ENCODE measurements at regions of chr3 and their contacts with region 1.

Region 1: DNA sequence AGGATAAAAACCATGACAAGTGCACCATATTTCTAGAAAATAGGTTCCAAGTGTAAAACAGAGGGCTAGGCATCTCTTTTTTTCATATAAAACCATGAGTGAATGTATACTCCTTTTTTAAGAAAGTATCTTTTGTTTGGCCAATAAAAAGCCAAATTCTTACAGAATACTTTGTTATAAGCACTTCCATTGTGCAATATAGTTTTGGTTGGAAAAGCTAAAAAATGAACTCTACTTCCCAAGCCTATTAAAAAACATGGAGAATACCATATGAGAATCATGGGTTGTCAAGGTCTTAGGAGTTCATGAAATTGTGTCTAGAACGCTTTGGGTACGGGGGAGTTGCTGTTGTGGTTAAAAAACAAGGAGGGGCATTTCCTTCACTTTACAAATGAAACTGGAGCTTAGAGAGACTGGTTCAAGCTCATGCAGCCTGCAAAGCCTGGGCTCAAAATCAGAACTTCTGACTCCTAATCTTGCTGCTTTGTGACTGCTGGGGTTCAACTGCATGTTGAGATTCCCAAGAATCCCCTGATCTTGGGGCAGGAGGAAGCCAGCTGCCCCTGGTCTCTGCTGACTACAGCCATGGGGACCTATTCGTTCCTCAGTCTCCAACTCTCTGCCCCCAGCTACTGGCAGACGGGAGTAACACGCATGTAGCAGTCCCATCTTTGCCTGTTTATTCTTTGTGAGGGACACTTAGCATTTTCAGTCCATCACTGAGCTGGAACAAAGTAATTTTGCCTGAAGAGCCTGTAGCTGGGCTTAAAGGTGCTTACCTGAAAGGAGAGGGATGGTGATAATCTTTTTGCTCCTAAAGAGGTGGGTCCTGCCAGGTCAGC is 229.1 kb downstream of the CHST2 start:
- DNase-seq: peak; percentile 29 to 78 (median 57)
- ATAC-seq: peak; percentile 97
- H3K4me3 ChIP-seq: no peak overlapping the region
- H3K27ac ChIP-seq: no peak overlapping the region
- H3K4me1 ChIP-seq: peaks cover 2 to 7% of the 10 kb centered on the region in 2 experiments; a peak in 1 of 5 replicates
- H3K27me3 ChIP-seq: no peaks in the 10 kb centered on the region
- CTCF ChIP-seq: peak; percentile 69 to 88 (median 74)
- EP300 ChIP-seq: no peak
- POLR2A ChIP-seq: no peak
- RAD21 ChIP-seq: peak; percentile 69 to 73

Region 2: GRCh38 chr3:142716102-142716501 is 632.6 kb before region 1 on chr3:
- CTCF ChIA-PET with region 1: no interaction called
- POLR2A ChIA-PET with region 1: no interaction called
- in situ Hi-C with region 1: no loop called
- intact Hi-C with region 1: no loop called
- DNase-seq: no peak
- ATAC-seq: no peak
- H3K4me3 ChIP-seq: no peak overlapping the region
- H3K27ac ChIP-seq: no peak overlapping the region
- H3K4me1 ChIP-seq: no peaks in the 10 kb centered on the region
- H3K27me3 ChIP-seq: no peaks in the 10 kb centered on the region
- CTCF ChIP-seq: no peak
- EP300 ChIP-seq: no peak
- POLR2A ChIP-seq: no peak
- RAD21 ChIP-seq: no peak

Region 3: GRCh38 chr3:143119009-143119914 is 229.4 kb before region 1 on chr3 and contains the start of gene CHST2:
- CTCF ChIA-PET with region 1: no interaction called
- POLR2A ChIA-PET with region 1: no interaction called
- in situ Hi-C with region 1: no loop called
- intact Hi-C with region 1: loop called (anchors 5 kb)
- DNase-seq: peak; percentile 89 to 97 (median 95)
- ATAC-seq: peak; percentile 89
- H3K4me3 ChIP-seq: peak within 1 kb of the TSS; percentile 89
- H3K27ac ChIP-seq: peak within 1 kb of the TSS; percentile 99
- H3K4me1 ChIP-seq: peaks cover 32 to 34% of the 10 kb centered on the region in 2 experiments; a peak in 4 of 5 replicates
- H3K27me3 ChIP-seq: no peaks in the 10 kb centered on the region
- CTCF ChIP-seq: no peak
- EP300 ChIP-seq: peak; percentile 61; the same call in 1 of the 2 replicates
- POLR2A ChIP-seq: peak; percentile 91
- RAD21 ChIP-seq: peak in 1 of 2 experiments; percentile 16; a peak in 2 of 4 replicates
- polyA plus RNA-seq, gene CHST2: 3.4 to 3.7 TPM

Region 4: GRCh38 chr3:143337387-143337786 is 11.3 kb before region 1 on chr3:
- CTCF ChIA-PET with region 1: no interaction called
- POLR2A ChIA-PET with region 1: interaction called, 14 read pairs
- in situ Hi-C with region 1: no loop called
- intact Hi-C with region 1: no loop called
- DNase-seq: no peak
- ATAC-seq: no peak
- H3K4me3 ChIP-seq: no peak overlapping the region
- H3K27ac ChIP-seq: no peak overlapping the region
- H3K4me1 ChIP-seq: no peaks in the 10 kb centered on the region
- H3K27me3 ChIP-seq: no peaks in the 10 kb centered on the region
- CTCF ChIP-seq: no peak
- EP300 ChIP-seq: no peak
- POLR2A ChIP-seq: no peak
- RAD21 ChIP-seq: no peak

Region 5: DNA sequence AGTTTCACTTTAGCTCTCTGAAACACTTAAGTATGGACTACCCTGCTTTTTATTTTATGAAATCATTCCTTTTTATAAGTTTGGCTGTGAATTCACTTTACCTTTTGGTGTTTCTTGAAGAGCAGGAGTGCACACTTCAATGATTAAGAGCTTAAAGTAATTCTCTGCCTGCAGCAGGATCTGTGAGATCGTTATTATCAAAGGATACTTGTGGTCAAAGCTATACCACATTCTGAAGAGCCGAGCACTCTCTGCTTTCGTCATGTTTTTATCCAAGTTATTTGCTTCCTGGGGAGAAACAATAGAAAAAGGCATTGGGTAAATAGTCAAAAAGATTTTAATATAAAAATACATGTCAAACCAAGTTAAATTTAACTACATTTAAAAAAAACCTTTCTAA is 14.6 kb after region 1 on chr3:
- CTCF ChIA-PET with region 1: no interaction called
- POLR2A ChIA-PET with region 1: interaction called, 17 read pairs
- in situ Hi-C with region 1: no loop called
- intact Hi-C with region 1: no loop called
- DNase-seq: no peak
- ATAC-seq: peak; percentile 57
- H3K4me3 ChIP-seq: no peak overlapping the region
- H3K27ac ChIP-seq: peak overlapping the region; percentile 14; the same call in 1 of the 3 replicates
- H3K4me1 ChIP-seq: peaks cover 10 to 38% of the 10 kb centered on the region in 2 experiments
- H3K27me3 ChIP-seq: no peaks in the 10 kb centered on the region
- CTCF ChIP-seq: no peak
- EP300 ChIP-seq: no peak
- POLR2A ChIP-seq: no peak
- RAD21 ChIP-seq: no peak

Region 6: DNA sequence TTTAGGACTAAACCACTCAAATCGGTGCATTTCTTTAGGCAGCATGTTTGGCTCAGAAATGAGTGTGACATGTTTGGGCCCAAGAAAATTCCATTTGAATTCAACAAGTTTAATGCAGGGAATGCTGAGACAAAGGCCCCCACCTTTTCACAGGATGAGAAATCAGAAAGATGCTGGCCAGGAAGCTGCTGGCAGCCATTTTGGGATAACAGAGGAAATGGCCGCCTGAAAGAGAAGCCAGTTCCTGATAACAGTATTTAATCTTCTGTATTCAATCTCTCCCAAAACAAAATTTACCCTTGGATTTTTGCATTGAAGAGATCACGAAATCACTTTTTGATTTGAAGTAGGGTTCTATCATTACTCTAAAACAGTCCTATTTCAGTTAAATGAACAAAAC is 148.7 kb after region 1 on chr3:
- CTCF ChIA-PET with region 1: no interaction called
- POLR2A ChIA-PET with region 1: no interaction called
- in situ Hi-C with region 1: no loop called
- intact Hi-C with region 1: no loop called
- DNase-seq: no peak
- ATAC-seq: no peak
- H3K4me3 ChIP-seq: no peak overlapping the region
- H3K27ac ChIP-seq: no peak overlapping the region
- H3K4me1 ChIP-seq: no peaks in the 10 kb centered on the region
- H3K27me3 ChIP-seq: no peaks in the 10 kb centered on the region
- CTCF ChIP-seq: no peak
- EP300 ChIP-seq: no peak
- POLR2A ChIP-seq: no peak
- RAD21 ChIP-seq: no peak